Breast epithelium (tissue), 4 donors: ENCODE measurements at regions of chr12 and their contacts with region 1.

Region 1: GRCh38 chr12:81274637-81275529 is 197.0 kb downstream of the ACSS3 start:
- DNase-seq: no peak
- H3K4me3 ChIP-seq: no peak overlapping the region
- H3K27ac ChIP-seq: no peak overlapping the region
- H3K4me1 ChIP-seq: no peaks in the 10 kb centered on the region
- H3K27me3 ChIP-seq: no peaks in the 10 kb centered on the region
- CTCF ChIP-seq: no peak
- POLR2A ChIP-seq: no peak

Region 2: DNA sequence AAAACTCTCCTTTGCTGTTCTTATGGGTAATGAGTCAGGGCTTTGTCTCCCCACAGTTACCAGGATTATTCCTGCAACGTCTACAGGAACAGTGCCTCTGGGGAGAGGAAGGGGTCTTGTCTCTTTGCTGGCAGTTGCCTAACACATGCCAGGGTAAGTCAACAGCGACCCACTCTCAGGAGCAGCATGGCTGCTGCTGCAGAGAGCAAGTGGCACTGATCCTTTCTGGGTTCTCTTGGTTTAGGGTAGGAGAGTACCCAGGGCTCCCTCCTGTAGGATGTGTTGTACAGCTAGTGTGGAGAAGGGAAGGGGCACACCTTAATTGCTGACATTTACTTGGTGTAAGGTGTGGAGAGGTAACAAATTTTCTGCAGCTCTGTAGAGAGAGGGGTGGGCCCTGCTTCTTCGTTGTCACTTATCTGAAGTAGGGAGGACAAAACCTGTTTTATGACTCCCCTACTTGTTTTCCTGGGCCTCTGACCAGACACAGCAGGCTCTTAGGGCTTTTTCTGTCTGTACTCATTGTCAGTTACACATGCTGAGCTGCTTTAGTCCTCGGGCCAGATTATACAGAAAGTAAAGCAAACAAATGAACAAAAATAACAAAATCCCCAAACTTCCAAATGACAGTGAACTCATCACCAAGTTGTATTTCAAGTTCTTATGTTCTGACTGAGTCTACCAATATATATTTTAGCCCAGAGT is 28.8 kb before region 1 on chr12:
- intact Hi-C with region 1: no loop called
- DNase-seq: no peak
- H3K4me3 ChIP-seq: no peak overlapping the region
- H3K27ac ChIP-seq: no peak overlapping the region
- H3K4me1 ChIP-seq: no peaks in the 10 kb centered on the region
- H3K27me3 ChIP-seq: no peaks in the 10 kb centered on the region
- CTCF ChIP-seq: no peak
- POLR2A ChIP-seq: no peak

Region 3: GRCh38 chr12:81809829-81810595 is 535.1 kb after region 1 on chr12:
- intact Hi-C with region 1: loop called (anchors 5 kb)
- DNase-seq: no peak
- H3K4me3 ChIP-seq: no peak overlapping the region
- H3K27ac ChIP-seq: peak overlapping the region in 1 of 2 donors; percentile 9
- H3K4me1 ChIP-seq: no peaks in the 10 kb centered on the region
- H3K27me3 ChIP-seq: no peaks in the 10 kb centered on the region
- CTCF ChIP-seq: no peak
- POLR2A ChIP-seq: no peak